Natural killer cell (primary cell): ENCODE measurements at regions of chr4 and their contacts with region 1.

Region 1: DNA sequence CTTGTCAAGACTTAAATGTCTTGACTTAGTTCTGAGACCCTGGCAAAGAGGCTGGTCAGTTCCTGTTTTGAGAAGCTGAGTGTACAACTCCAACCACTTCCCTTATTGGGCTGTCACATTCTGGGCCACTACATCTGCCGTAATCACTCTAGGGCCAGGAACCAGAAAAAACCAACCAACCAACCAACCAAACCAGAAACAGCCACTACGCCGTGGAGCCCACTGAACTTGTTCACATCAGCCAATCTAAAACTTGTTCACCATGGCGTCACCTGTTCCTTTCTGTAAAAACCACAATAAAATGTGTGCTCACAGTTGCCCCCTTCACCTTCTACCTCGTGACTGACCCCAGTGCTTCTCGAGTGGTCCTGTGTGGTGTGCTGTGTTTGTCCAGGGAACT is 107.3 kb downstream of the JADE1 start:
- DNase-seq: peak; percentile 38 to 57
- ATAC-seq: peak; percentile 83 to 92 (median 89)
- H3K4me3 ChIP-seq: no peak overlapping the region
- H3K4me3 Mint-ChIP-seq: peak overlapping the region; percentile 79
- H3K27ac ChIP-seq: peak overlapping the region; percentile 83
- H3K27ac Mint-ChIP-seq: peak overlapping the region; percentile 73 to 90
- H3K4me1 ChIP-seq: peaks cover 22% of the 10 kb centered on the region
- H3K4me1 Mint-ChIP-seq: peaks cover 68 to 70% of the 10 kb centered on the region in 2 donors
- H3K27me3 ChIP-seq: no peaks in the 10 kb centered on the region
- H3K27me3 Mint-ChIP-seq: no peaks in the 10 kb centered on the region
- CTCF ChIP-seq: no peak

Region 2: GRCh38 chr4:128782076-128782715 is 134.6 kb before region 1 on chr4:
- intact Hi-C with region 1: no loop called
- DNase-seq: peak; percentile 37 to 82
- ATAC-seq: peak; percentile 71 to 89 (median 88)
- H3K4me3 ChIP-seq: no peak overlapping the region
- H3K4me3 Mint-ChIP-seq: no peak overlapping the region
- H3K27ac ChIP-seq: no peak overlapping the region
- H3K27ac Mint-ChIP-seq: no peak overlapping the region
- H3K4me1 ChIP-seq: no peaks in the 10 kb centered on the region
- H3K4me1 Mint-ChIP-seq: no peaks in the 10 kb centered on the region
- H3K27me3 ChIP-seq: no peaks in the 10 kb centered on the region
- H3K27me3 Mint-ChIP-seq: peaks cover 6% of the 10 kb centered on the region in 2 donors
- CTCF ChIP-seq: peak; percentile 49

Region 3: DNA sequence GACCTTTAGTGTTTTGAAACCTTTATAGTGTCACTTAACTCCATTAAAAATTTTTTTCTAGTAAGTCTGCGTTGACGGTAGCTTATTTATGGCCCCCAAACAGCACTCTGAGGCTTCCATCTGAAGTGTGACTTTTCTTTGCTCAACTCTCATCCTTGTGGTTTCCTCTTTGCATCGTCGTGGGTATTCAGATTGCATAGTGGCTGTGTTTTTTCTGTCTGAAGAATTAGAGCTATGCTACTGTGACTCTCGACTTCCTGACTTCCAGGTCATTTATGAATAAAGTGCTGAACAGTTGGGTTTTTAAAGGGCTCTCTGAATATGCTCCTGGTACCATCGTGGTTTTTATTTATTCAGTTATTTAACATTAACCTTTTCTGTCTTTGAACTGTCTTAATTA is 62.4 kb before region 1 on chr4:
- intact Hi-C with region 1: loop called (anchors 2 kb)
- DNase-seq: peak in 1 of 2 donors; percentile 75
- ATAC-seq: peak; percentile 92 to 98 (median 93)
- H3K4me3 ChIP-seq: no peak overlapping the region
- H3K4me3 Mint-ChIP-seq: peak overlapping the region; percentile 85
- H3K27ac ChIP-seq: peak overlapping the region; percentile 68
- H3K27ac Mint-ChIP-seq: peak overlapping the region; percentile 95 to 98
- H3K4me1 ChIP-seq: peaks cover 20% of the 10 kb centered on the region
- H3K4me1 Mint-ChIP-seq: peaks cover 49 to 57% of the 10 kb centered on the region in 2 donors
- H3K27me3 ChIP-seq: no peaks in the 10 kb centered on the region
- H3K27me3 Mint-ChIP-seq: no peaks in the 10 kb centered on the region
- CTCF ChIP-seq: no peak